K562 (cell line): ENCODE measurements at regions of chr3 and their contacts with region 1.

Region 1: DNA sequence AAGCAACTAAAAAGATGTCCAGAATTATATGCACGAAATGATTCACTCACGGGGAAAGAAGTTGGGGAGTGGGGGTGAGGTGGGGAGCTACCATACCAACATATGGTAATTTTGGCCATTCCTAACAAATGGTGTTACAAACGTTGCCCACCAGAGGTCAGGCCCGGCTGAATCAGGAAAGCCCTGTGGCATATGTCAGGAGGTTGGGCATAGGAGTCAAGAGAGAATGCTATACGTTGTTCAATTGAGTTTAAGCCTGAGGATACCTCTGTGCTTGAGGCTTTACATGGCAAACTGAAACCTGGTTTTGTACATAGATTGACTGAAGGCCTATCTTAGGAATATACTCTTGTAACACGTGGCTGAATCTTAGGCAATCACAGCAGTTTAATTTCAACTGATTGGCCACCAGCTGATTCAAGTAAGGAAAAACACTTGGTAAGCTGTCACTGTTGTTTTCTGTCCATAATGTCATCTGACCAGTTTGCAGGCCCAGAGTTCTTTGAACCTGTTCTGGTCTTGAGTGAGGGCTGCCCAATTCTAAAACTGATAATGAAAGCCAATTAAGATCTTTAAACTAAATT is 23.4 kb upstream of the SLC2A2 start:
- DNase-seq: peak; percentile 27 to 65 (median 45)
- ATAC-seq: peak; percentile 94
- H3K4me3 ChIP-seq: no peak overlapping the region
- H3K27ac ChIP-seq: no peak overlapping the region
- H3K4me1 ChIP-seq: no peaks in the 10 kb centered on the region
- H3K27me3 ChIP-seq: 0 out of 5 replicates have a peak, but pooled peaks cover 0 to 2% of the 10 kb centered on the region in 2 experiments
- CTCF ChIP-seq: peak; percentile 72 to 83 (median 78)
- EP300 ChIP-seq: no peak
- POLR2A ChIP-seq: no peak
- RAD21 ChIP-seq: peak; percentile 75 to 90

Region 2: DNA sequence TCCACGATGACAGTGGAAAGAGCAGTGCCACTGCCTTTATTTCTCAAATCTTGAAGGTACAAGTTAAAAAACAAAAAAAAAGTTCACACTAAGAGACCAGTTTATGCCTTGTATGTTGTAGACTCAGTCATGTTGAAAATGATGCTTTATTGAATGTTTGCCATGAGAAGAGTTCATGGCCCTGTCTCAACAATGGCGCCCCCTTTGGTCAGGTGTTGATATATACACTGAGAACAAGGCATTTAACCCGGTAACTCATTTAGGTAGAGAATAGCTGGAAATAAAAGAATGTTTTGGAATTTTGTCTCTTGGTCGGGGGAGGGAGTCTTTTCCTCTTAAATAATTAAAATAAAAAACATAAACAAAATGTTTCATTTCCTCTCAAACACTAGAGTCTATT is 122.1 kb after region 1 on chr3:
- CTCF ChIA-PET with region 1: no interaction called
- POLR2A ChIA-PET with region 1: no interaction called
- in situ Hi-C with region 1: no loop called
- intact Hi-C with region 1: loop called (anchors 2 kb)
- DNase-seq: peak in 3 of 4 experiments; percentile 48 to 54 (median 49)
- ATAC-seq: peak; percentile 69; the same call in 2 of the 3 replicates
- H3K4me3 ChIP-seq: no peak overlapping the region
- H3K27ac ChIP-seq: no peak overlapping the region
- H3K4me1 ChIP-seq: no peaks in the 10 kb centered on the region; a peak in 2 of 5 replicates
- H3K27me3 ChIP-seq: no peaks in the 10 kb centered on the region
- CTCF ChIP-seq: peak; percentile 56 to 61 (median 59)
- EP300 ChIP-seq: no peak
- POLR2A ChIP-seq: no peak
- RAD21 ChIP-seq: peak in 1 of 2 experiments; percentile 19; a peak in 1 of 4 replicates

Region 3: DNA sequence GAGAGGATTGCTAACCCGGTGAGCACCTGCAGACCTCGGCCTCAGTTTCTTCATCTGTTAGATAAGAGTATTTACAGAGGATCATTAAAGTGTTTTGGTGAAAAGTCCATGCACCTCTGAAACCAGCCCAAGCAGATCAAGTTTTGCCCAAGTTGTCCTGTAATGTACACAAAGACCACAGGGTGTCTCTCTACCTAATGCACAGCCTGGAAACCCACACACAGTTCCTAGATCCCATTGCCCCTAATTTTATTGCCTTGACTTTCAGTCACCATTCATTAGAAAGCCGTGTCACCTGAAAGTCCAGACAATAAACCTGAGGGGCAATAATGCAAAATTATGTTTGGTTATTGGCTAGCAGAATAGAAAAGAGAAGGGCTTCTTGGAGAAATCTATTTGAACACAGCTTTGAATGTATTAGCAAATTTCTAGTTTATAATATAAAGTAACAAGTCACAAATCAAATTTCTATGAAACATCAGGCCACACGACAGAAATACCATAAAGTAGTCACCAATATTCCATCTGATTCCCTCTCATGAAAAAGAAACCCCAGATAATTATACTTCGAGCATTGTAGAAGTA is 137.8 kb after region 1 on chr3:
- CTCF ChIA-PET with region 1: no interaction called
- POLR2A ChIA-PET with region 1: no interaction called
- in situ Hi-C with region 1: no loop called
- intact Hi-C with region 1: loop called (anchors 1 kb)
- DNase-seq: peak; percentile 32 to 63 (median 46)
- ATAC-seq: peak; percentile 62
- H3K4me3 ChIP-seq: no peak overlapping the region
- H3K27ac ChIP-seq: no peak overlapping the region
- H3K4me1 ChIP-seq: peaks cover 4 to 35% of the 10 kb centered on the region in 2 experiments
- H3K27me3 ChIP-seq: no peaks in the 10 kb centered on the region
- CTCF ChIP-seq: peak; percentile 67 to 71 (median 70)
- EP300 ChIP-seq: no peak
- POLR2A ChIP-seq: no peak
- RAD21 ChIP-seq: peak; percentile 67 to 81